Naive thymus-derived CD4-positive, alpha-beta T cell (primary cell): ENCODE measurements at regions of chr21 and their contacts with region 1.

Region 1: GRCh38 chr21:42145569-42146272 is 73.2 kb upstream of the ABCG1 start:
- DNase-seq: peak; percentile 37 to 81 (median 68)
- ATAC-seq: peak; percentile 90
- H3K4me3 ChIP-seq: no peak overlapping the region
- H3K4me3 Mint-ChIP-seq: peak overlapping the region in 2 of 10 donors; percentile 41 to 43
- H3K27ac ChIP-seq: no peak overlapping the region
- H3K27ac Mint-ChIP-seq: peak overlapping the region in 6 of 9 donors; percentile 0 to 56 (median 40)
- H3K4me1 ChIP-seq: peaks cover 3 to 5% of the 10 kb centered on the region in 2 donors
- H3K4me1 Mint-ChIP-seq: peaks cover 5 to 13% (median 10%) of the 10 kb centered on the region in 7 donors
- H3K27me3 ChIP-seq: no peaks in the 10 kb centered on the region
- H3K27me3 Mint-ChIP-seq: peaks cover 0 to 4% (median 0%) of the 10 kb centered on the region in 5 donors

Region 2: GRCh38 chr21:42097860-42098454 is 47.8 kb before region 1 on chr21:
- CTCF ChIA-PET with region 1: no interaction called
- POLR2A ChIA-PET with region 1: no interaction called
- intact Hi-C with region 1: no loop called
- DNase-seq: no peak
- ATAC-seq: peak; percentile 89
- H3K4me3 ChIP-seq: no peak overlapping the region
- H3K4me3 Mint-ChIP-seq: no peak overlapping the region
- H3K27ac ChIP-seq: no peak overlapping the region
- H3K27ac Mint-ChIP-seq: no peak overlapping the region
- H3K4me1 ChIP-seq: no peaks in the 10 kb centered on the region
- H3K4me1 Mint-ChIP-seq: peaks cover 0 to 12% (median 0%) of the 10 kb centered on the region in 7 donors
- H3K27me3 ChIP-seq: no peaks in the 10 kb centered on the region
- H3K27me3 Mint-ChIP-seq: peaks cover 0 to 16% (median 0%) of the 10 kb centered on the region in 5 donors

Region 3: GRCh38 chr21:42187976-42188653 is 42.4 kb after region 1 on chr21:
- CTCF ChIA-PET with region 1: interaction called, 3 read pairs
- POLR2A ChIA-PET with region 1: no interaction called
- intact Hi-C with region 1: loop called (anchors 1 to 5 kb)
- DNase-seq: peak; percentile 39 to 90 (median 86)
- ATAC-seq: peak; percentile 96
- H3K4me3 ChIP-seq: peak overlapping the region; percentile 25
- H3K4me3 Mint-ChIP-seq: peak overlapping the region; percentile 39 to 90 (median 75)
- H3K27ac ChIP-seq: peak overlapping the region; percentile 85
- H3K27ac Mint-ChIP-seq: peak overlapping the region; percentile 91 to 98 (median 95)
- H3K4me1 ChIP-seq: peaks cover 73 to 90% of the 10 kb centered on the region in 2 donors
- H3K4me1 Mint-ChIP-seq: peaks cover 34 to 83% (median 65%) of the 10 kb centered on the region in 7 donors
- H3K27me3 ChIP-seq: no peaks in the 10 kb centered on the region
- H3K27me3 Mint-ChIP-seq: peaks cover 0 to 8% (median 0%) of the 10 kb centered on the region in 5 donors

Region 4: GRCh38 chr21:42258153-42258884 is 112.6 kb after region 1 on chr21:
- CTCF ChIA-PET with region 1: interaction called, 108 read pairs
- POLR2A ChIA-PET with region 1: interaction called, 9 read pairs
- intact Hi-C with region 1: loop called in 1 of 2 experiments (anchors 1 kb)
- DNase-seq: peak; percentile 66 to 87 (median 77)
- ATAC-seq: peak; percentile 94
- H3K4me3 ChIP-seq: no peak overlapping the region
- H3K4me3 Mint-ChIP-seq: no peak overlapping the region
- H3K27ac ChIP-seq: no peak overlapping the region
- H3K27ac Mint-ChIP-seq: peak overlapping the region in 4 of 9 donors; percentile 12 to 59 (median 45)
- H3K4me1 ChIP-seq: no peaks in the 10 kb centered on the region
- H3K4me1 Mint-ChIP-seq: peaks cover 20 to 46% (median 35%) of the 10 kb centered on the region in 7 donors
- H3K27me3 ChIP-seq: no peaks in the 10 kb centered on the region
- H3K27me3 Mint-ChIP-seq: peaks cover 0 to 5% (median 0%) of the 10 kb centered on the region in 5 donors

Region 5: GRCh38 chr21:42337830-42338728 is 192.4 kb after region 1 on chr21:
- CTCF ChIA-PET with region 1: no interaction called
- POLR2A ChIA-PET with region 1: no interaction called
- intact Hi-C with region 1: loop called in 1 of 2 experiments (anchors 1 kb)
- DNase-seq: peak; percentile 68 to 85 (median 78)
- ATAC-seq: peak; percentile 99
- H3K4me3 ChIP-seq: no peak overlapping the region
- H3K4me3 Mint-ChIP-seq: peak overlapping the region; percentile 28 to 76 (median 60)
- H3K27ac ChIP-seq: no peak overlapping the region
- H3K27ac Mint-ChIP-seq: peak overlapping the region in 7 of 9 donors; percentile 19 to 75 (median 53)
- H3K4me1 ChIP-seq: peaks cover 4 to 7% of the 10 kb centered on the region in 2 donors
- H3K4me1 Mint-ChIP-seq: peaks cover 5 to 12% (median 8%) of the 10 kb centered on the region in 7 donors
- H3K27me3 ChIP-seq: no peaks in the 10 kb centered on the region
- H3K27me3 Mint-ChIP-seq: peaks cover 0 to 32% (median 0%) of the 10 kb centered on the region in 5 donors

Region 6: GRCh38 chr21:42454786-42455580 is 309.3 kb after region 1 on chr21:
- CTCF ChIA-PET with region 1: interaction called, 3 read pairs
- POLR2A ChIA-PET with region 1: no interaction called
- intact Hi-C with region 1: loop called (anchors 1 kb)
- DNase-seq: no peak
- ATAC-seq: no peak
- H3K4me3 ChIP-seq: no peak overlapping the region
- H3K4me3 Mint-ChIP-seq: peak overlapping the region in 1 of 10 donors; percentile 17
- H3K27ac ChIP-seq: no peak overlapping the region
- H3K27ac Mint-ChIP-seq: peak overlapping the region in 2 of 9 donors; percentile 32 to 45
- H3K4me1 ChIP-seq: peaks cover 0 to 17% of the 10 kb centered on the region in 2 donors
- H3K4me1 Mint-ChIP-seq: peaks cover 19 to 61% (median 48%) of the 10 kb centered on the region in 7 donors
- H3K27me3 ChIP-seq: no peaks in the 10 kb centered on the region
- H3K27me3 Mint-ChIP-seq: no peaks in the 10 kb centered on the region